ENCODE measurements at regions of chr14 and their contacts with region 1.

Region 1: GRCh38 chr14:58131386-58131785 is 20.6 kb downstream of the ARMH4 start:
- DNase-seq: no peak
- H3K4me3 ChIP-seq: no peak overlapping the region
- H3K27ac ChIP-seq: no peak overlapping the region
- H3K4me1 ChIP-seq: no peaks in the 10 kb centered on the region
- CTCF ChIP-seq: no peak

Region 2: DNA sequence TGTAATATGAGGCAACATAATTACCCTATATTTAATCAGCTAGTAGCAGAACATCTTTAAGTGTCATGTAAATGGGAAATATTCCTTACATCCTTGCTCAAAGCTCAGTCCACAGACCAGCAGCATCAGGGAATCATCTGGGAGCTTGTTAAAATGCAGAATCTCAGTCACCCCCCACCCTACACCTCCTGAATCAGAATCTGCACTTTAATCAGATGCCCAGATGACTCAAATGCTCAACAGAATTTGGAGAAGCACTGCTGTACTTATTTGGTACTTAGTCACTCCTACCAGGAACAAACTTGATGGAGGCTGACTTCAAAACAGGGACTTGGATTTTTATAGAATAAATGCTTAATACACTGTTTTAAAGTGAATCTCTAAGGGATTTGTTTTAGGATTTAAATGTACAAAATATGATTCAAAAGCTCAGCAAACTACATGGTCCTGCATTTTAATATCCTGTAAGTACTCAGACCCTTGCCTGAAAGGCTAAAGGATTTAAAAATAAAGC is 75.8 kb before region 1 on chr14:
- CTCF ChIA-PET with region 1: no interaction called
- POLR2A ChIA-PET with region 1: interaction called, 11 read pairs
- intact Hi-C with region 1: no loop called
- DNase-seq: no peak
- H3K4me3 ChIP-seq: no peak overlapping the region
- H3K27ac ChIP-seq: no peak overlapping the region
- H3K4me1 ChIP-seq: no peaks in the 10 kb centered on the region
- CTCF ChIP-seq: no peak

Region 3: GRCh38 chr14:58160561-58160960 is 29.2 kb after region 1 on chr14:
- CTCF ChIA-PET with region 1: no interaction called
- POLR2A ChIA-PET with region 1: interaction called, 11 read pairs
- intact Hi-C with region 1: no loop called
- DNase-seq: no peak
- H3K4me3 ChIP-seq: no peak overlapping the region
- H3K27ac ChIP-seq: no peak overlapping the region
- H3K4me1 ChIP-seq: no peaks in the 10 kb centered on the region
- CTCF ChIP-seq: no peak

Measured in OCI-LY7 (cell line).